Thyroid gland (tissue), 4 donors: ENCODE measurements at regions of chr1 and their contacts with region 1.

Region 1: DNA sequence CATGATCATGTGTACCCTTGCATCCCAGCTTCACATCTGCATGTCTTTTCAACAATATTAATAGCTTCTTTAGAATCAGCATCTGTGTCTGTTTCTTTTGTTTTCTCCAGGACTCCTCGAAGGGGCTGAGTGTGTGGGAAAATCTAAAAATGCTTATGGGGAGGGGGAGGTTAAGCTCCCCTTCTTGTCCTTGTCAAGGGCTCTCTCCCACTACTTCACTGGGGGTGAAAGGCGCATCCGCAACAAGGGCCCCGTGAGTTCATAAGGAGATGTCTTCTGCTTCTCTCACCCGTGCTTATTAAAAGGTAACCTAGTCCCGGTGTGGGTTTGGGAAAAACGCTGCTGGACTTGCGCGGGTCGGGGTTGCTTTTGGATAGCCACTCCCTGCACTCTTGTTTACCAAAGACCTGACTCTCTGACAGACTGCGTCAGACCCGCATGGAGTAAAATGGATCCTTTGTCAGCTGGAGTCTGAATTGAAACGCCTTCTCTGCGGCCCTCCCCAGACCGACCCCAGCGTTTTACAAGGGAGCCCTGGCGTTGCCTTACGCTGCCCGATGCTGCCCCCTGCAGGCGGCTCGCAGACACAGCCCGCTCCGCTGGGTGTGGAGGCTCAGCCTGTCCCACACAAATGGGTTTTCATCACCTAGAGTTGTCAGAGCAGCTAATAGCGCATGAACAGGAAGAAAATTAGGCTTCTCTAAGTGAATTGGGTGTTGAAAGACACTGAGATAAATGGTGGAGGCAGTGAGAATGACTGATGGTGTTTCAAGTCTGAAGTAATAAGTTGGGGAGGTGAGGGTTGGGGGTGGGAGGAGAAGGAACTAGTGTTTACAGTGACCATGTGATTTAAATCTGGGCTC is 53.8 kb downstream of the IER5 start:
- DNase-seq: peak; percentile 81 to 86
- H3K4me3 ChIP-seq: no peak overlapping the region
- H3K27ac ChIP-seq: no peak overlapping the region
- H3K4me1 ChIP-seq: peaks cover 3 to 12% of the 10 kb centered on the region in 2 donors
- H3K27me3 ChIP-seq: no peaks in the 10 kb centered on the region
- CTCF ChIP-seq: peak; percentile 94 to 98 (median 95)
- POLR2A ChIP-seq: peak in 1 of 2 donors; percentile 16

Region 2: GRCh38 chr1:180515864-180516388 is 626.4 kb before region 1 on chr1:
- intact Hi-C with region 1: loop called (anchors 10 kb)
- DNase-seq: peak; percentile 56 to 69
- H3K4me3 ChIP-seq: no peak overlapping the region
- H3K27ac ChIP-seq: no peak overlapping the region
- H3K4me1 ChIP-seq: no peaks in the 10 kb centered on the region
- H3K27me3 ChIP-seq: no peaks in the 10 kb centered on the region
- CTCF ChIP-seq: peak; percentile 45 to 88 (median 82)
- POLR2A ChIP-seq: no peak

Region 3: DNA sequence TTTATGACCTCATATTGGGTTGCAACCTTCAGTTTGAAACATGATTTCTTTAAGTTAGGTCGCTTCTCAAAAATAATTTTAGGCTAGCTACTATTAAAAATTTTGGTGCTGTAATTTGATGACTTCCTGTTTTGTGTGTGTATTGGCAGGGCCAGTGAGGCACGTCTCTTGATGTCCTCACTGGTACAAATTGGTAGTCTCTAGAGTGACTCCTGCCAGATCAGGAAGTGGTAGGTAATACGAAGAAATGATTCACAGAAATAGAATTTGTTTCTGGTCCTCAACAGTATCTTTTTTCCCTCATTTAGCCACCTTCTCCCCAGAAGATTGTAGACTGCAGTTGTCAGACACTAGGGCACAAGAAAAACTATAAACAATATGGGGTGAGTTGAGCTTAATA is 350.5 kb before region 1 on chr1:
- intact Hi-C with region 1: no loop called
- DNase-seq: no peak
- H3K4me3 ChIP-seq: no peak overlapping the region
- H3K27ac ChIP-seq: no peak overlapping the region
- H3K4me1 ChIP-seq: no peaks in the 10 kb centered on the region
- H3K27me3 ChIP-seq: no peaks in the 10 kb centered on the region
- CTCF ChIP-seq: no peak
- POLR2A ChIP-seq: no peak

Region 4: DNA sequence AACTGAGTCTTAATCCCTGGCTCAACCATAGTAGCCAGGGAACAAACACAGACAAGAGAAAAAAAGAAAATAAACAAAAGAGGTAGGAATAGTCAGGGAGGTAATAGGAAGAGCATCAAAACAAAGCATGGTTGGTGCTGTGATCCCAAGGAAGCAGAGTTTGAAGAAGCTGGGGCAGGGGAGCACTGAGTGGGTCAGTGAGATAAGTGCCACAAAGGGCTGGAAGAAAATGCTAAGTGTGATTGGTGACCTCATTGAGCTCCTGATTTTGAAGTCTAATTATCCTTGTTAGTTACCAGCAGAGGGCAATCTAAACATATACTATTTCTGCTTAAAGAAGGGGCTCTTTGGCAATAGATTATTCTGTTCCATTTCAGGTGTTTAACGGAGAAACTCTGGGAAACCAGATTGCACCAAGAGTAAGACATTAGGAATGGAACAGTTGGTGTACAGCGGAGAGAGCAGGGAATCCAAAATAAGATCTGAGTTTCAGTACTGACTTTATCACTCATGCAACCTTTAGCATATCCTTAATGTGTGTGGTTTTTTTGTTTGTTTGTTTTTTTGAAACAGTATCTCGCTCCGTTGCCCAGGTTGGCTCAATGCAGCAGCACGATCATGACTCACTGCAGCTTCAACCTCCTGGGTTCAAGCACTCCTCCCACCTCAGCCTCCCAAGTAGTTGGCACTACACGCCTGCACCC is 260.4 kb before region 1 on chr1:
- intact Hi-C with region 1: loop called (anchors 5 kb)
- DNase-seq: no peak
- H3K4me3 ChIP-seq: no peak overlapping the region
- H3K27ac ChIP-seq: no peak overlapping the region
- H3K4me1 ChIP-seq: no peaks in the 10 kb centered on the region
- H3K27me3 ChIP-seq: no peaks in the 10 kb centered on the region
- CTCF ChIP-seq: peak in 4 of 6 experiments; percentile 34 to 78 (median 62)
- POLR2A ChIP-seq: no peak

Region 5: GRCh38 chr1:180898441-180899219 is 243.7 kb before region 1 on chr1:
- intact Hi-C with region 1: no loop called
- DNase-seq: no peak
- H3K4me3 ChIP-seq: no peak overlapping the region
- H3K27ac ChIP-seq: no peak overlapping the region
- H3K4me1 ChIP-seq: no peaks in the 10 kb centered on the region
- H3K27me3 ChIP-seq: no peaks in the 10 kb centered on the region
- CTCF ChIP-seq: no peak
- POLR2A ChIP-seq: no peak

Region 6: DNA sequence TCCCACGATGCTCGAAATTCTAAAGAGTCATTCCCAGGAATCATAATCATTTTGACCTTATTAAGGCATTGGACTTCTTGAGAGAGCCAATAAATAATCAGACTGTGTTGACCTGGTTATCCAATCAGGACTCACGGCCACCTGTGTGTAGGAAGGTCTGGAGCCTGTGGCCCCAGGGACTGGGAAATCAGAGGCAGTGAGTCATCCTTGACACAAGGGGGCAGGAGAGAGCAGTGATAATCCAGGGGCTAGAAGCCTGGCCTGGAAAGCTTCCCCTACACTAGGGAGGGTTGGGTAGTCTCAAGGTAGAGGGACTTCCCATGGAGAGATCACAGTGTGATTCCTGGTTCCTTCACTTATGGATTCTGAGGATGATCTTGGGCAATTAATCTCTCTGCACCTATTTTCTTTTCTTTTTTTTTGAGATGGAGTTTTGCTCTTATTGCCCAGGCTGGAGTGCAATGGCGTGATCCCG is 103.9 kb before region 1 on chr1:
- intact Hi-C with region 1: loop called (anchors 5 kb)
- DNase-seq: peak; percentile 35 to 55
- H3K4me3 ChIP-seq: no peak overlapping the region
- H3K27ac ChIP-seq: no peak overlapping the region
- H3K4me1 ChIP-seq: peaks cover 31% of the 10 kb centered on the region in 2 donors
- H3K27me3 ChIP-seq: no peaks in the 10 kb centered on the region
- CTCF ChIP-seq: peak; percentile 17 to 70 (median 62)
- POLR2A ChIP-seq: no peak

Region 7: DNA sequence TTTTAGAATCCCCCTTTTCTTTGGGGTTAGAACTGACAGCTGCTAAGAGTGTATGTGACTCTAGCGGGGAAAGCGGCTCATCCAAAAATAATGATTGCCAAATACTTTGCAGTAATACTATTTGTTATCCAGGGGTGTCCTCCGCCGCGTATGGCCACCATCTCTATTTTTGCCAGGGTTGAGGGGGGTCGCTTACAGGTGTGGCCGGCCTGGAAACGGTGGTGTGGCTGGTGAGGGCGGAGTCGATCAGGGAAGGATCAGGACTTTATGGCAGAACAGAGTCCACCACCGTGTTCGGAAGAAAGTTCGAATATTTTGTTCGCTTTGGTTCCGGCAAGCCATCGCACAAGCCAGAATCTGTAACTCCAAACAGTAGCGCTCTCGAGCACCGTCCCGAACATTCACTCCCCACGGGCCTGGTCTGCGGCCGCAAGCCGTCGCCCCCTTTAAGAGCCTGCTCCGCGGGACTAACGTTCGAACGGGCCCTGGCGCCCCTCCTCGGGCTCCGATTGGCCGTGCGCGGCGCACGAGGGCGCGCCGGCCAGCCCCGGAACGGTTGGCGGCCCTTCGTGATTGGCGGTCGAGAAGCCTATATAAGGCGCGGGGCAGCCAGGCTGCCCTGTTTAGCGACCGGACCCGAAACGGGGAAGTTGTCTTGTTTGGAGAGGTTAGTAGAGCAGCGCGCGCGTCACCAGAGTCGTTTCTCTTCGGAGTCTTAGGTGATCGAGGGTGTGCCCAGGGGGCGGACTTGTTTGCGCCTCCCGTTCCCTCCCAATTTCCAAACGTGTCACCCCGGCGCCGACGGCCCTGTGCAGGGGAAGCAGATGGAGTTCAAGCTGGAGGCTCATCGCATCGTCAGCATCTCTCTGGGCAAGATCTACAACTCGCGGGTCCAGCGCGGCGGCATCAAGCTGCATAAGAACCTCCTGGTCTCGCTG is 54.0 kb before region 1 on chr1 and contains the start of gene IER5:
- intact Hi-C with region 1: loop called (anchors 5 kb)
- DNase-seq: peak; percentile 95 to 96
- H3K4me3 ChIP-seq: peak within 1 kb of the TSS; percentile 63 to 76 (median 70)
- H3K27ac ChIP-seq: peak within 1 kb of the TSS; percentile 56 to 85 (median 82)
- H3K4me1 ChIP-seq: peaks cover 7 to 8% of the 10 kb centered on the region in 2 donors
- H3K27me3 ChIP-seq: no peaks in the 10 kb centered on the region
- CTCF ChIP-seq: peak in 1 of 6 experiments; percentile 14
- POLR2A ChIP-seq: peak; percentile 92 to 100
- total RNA-seq, gene IER5: 7.2 to 7.8 (median 7.6) TPM

Region 8: DNA sequence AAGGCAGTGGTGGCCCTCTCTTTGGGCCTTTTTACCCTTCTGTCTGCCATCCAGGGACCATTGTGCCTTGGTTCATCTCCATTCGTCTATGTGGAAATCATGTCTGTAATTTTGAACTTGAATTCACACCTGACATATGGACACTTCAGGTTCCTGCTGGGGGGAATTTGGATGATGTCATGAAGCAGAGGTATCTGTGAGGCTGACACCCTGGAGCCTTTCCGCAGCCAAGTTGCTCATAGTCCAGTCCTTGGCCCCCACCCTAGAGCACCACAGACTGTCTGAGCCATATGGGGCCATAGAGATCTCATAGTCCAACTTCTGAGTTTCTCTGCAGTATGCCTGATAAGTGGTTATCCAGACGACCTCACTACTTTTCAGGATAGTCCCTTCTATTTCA is 193.3 kb after region 1 on chr1:
- intact Hi-C with region 1: no loop called
- DNase-seq: no peak
- H3K4me3 ChIP-seq: no peak overlapping the region
- H3K27ac ChIP-seq: no peak overlapping the region
- H3K4me1 ChIP-seq: no peaks in the 10 kb centered on the region
- H3K27me3 ChIP-seq: no peaks in the 10 kb centered on the region
- CTCF ChIP-seq: no peak
- POLR2A ChIP-seq: no peak